Posterior vena cava (tissue), 2 donors: ENCODE measurements at regions of chr12 and their contacts with region 1.

Region 1: GRCh38 chr12:31895449-31896150 is 63.6 kb upstream of the RESF1 start:
- DNase-seq: no peak

Region 2: DNA sequence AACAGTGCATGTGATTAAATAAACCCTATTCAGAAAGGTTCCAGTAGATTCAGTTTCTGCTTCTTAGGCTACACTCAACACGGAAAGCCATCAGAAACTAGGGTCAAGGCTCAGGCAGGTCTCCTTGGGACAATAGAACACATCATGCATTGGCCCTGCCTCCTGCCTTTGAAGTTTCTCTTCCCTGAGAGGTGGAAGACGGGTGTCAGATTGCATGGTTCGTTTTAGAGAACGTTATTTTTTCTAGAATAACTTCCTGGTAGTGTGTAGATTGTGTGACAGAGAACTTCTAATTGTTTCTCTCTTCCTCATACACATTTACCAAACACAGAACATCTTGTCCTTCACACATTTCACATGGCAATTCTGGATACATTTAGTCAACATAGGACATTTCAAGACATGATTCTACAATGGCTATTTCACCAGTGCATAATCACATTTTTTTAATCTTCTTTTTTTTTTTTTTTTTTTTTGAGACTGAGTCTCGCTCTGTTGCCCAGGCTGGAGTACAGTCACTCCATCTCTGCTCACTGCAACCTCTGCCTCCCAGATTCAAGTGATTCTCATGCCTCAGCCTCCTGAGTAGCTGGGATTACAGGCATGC is 60.2 kb before region 1 on chr12:
- intact Hi-C with region 1: loop called in 1 of 2 experiments (anchors 2 kb)
- DNase-seq: no peak